Activated CD4-positive, alpha-beta T cell treated with anti-CD3 and anti-CD28 coated beads for 36 hours (primary cell): ENCODE measurements at regions of chrX and their contacts with region 1.

Region 1: GRCh38 chrX:108091266-108091877 is at the starts of genes ATG4A and PSMD10:
- DNase-seq: peak; percentile 94
- ATAC-seq: peak; percentile 96
- H3K4me3 Mint-ChIP-seq: no peak within 1 kb of the TSS
- H3K27ac Mint-ChIP-seq: no peak within 1 kb of the TSS
- H3K4me1 Mint-ChIP-seq: peaks cover 13% of the 10 kb centered on the region
- H3K27me3 Mint-ChIP-seq: no peaks in the 10 kb centered on the region
- total RNA-seq, gene ATG4A: 7.1 to 7.4 TPM
- total RNA-seq, gene PSMD10: 42.8 to 54.5 TPM

Region 2: DNA sequence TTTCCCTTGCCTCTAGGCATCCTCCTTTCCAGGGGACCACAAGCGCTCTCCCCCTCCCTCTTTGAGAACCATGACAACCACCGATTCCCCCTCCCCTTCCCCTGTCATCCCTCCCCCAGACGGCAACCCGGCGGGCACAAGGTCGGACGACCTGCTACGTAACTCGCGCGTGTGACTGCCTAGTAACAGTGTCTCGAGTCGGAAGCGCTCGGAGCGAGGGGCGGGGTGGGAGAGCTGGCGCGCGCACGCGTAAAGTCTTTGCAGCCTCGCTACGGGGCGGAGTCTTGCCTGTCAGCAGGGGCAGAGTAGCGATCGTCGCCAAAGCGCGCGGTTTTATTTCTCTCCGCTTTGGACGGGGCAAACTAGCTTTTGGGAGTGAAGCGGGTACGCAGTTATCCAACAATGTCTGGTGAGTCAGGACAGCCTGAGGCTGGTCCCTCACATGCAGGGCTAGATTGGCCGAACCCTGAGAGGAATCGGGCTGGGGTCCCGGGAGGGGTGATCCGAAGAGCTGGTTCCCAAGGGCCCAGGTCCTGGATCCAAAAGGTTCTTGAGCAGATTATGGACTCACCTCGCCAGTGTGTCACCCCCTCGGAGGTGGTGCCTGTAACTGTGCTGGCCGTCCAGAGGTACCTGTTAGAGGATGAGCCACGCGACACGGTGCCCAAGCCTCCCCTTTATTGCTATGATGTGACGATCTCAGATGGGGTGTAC is 1479.5 kb before region 1 on chrX and contains the start of gene RADX:
- CTCF ChIA-PET with region 1: no interaction called
- POLR2A ChIA-PET with region 1: no interaction called
- intact Hi-C with region 1: loop called in 1 of 2 experiments (anchors 10 kb)
- DNase-seq: peak; percentile 92
- ATAC-seq: peak; percentile 99
- H3K4me3 Mint-ChIP-seq: peak within 1 kb of the TSS; percentile 81
- H3K27ac Mint-ChIP-seq: peak within 1 kb of the TSS; percentile 86
- H3K4me1 Mint-ChIP-seq: peaks cover 14% of the 10 kb centered on the region
- H3K27me3 Mint-ChIP-seq: no peaks in the 10 kb centered on the region
- total RNA-seq, gene RADX: 9.3 to 14.7 TPM

Region 3: DNA sequence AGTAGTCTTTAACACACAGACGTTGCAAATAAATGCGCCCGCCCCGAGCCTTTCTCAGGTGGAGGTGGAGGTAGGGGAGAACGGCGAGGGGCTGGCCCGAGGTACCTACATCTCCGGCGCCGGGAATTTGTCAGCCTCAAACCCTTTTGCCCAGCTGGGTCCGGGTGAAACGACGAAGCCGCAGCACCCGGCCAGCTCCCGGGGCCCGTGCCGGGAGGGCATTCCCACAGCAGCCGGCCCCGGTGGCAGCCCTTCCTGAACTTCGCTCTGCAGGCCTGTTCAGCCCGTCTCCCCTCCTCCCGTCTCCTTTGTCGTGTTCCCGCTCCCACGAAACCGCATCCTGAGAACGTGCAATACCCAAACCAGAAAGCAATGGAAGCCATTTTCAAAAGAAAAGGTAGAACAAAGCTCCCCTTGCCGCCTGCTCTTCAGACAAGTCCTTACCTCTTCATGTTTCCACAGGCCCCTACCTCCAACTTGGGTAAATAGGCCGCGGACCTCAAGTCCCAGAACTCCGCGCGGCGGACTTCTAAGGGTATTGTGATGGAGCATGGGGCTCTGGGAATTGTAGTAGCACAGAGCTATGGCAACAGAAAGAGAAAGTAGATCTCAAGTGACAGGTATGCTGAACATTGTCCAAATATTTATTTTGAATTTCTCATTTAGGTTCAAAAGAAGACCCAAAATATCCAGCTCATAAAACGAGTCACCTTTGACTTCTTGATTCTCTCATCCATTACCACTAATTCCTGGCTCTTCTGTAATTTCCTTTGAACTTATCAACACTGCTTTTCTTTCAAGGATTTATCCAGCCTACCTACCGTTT is 972.8 kb before region 1 on chrX and contains the start of gene RBM41:
- CTCF ChIA-PET with region 1: no interaction called
- POLR2A ChIA-PET with region 1: no interaction called
- intact Hi-C with region 1: loop called in 1 of 2 experiments (anchors 2 kb)
- DNase-seq: peak; percentile 81
- ATAC-seq: peak; percentile 99
- H3K4me3 Mint-ChIP-seq: peak within 1 kb of the TSS; percentile 99
- H3K27ac Mint-ChIP-seq: peak within 1 kb of the TSS; percentile 98
- H3K4me1 Mint-ChIP-seq: peaks cover 27% of the 10 kb centered on the region
- H3K27me3 Mint-ChIP-seq: no peaks in the 10 kb centered on the region
- total RNA-seq, gene RBM41: 12.0 to 12.2 TPM

Region 4: DNA sequence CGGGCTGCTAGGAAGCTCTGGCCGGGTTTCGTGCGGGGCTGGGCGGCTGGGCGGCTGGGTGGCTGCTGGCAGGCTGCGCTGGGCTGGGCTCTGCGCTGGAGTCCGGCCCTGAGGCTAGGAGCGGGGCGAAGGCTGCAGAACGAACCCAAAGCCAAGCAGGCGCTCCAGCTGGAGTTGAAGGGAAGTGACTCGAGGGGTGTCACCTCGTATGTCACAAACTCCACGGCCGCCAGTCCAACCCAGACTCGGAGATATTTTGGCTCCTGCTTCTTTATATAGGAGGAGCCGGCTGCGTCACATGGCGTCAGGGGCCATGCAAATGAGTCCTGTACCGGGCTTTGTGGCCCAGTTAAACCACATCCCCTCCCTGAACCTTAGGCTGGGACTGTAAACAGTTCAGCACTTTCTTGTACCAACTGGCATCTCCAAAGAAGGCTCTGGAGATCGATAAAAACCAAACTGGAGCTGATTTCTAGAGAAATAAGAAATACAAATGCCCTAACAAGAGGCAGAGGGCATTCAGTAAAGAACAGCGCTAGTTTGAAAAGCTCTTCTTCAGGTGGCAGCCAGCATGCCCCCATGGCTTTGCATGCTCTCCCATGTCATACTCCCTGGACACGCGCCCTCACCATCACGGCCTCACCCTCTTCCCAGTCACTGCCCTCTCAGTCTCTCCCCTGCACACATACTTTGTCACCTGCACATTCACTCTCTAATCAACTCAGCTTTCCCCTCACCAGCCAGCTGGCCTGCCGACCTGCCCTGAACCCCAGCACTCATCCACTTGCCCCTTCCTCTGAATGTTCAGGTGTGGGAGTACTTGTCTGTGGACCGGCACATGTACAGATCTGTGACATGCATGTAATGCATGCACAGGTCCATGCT is 374.3 kb before region 1 on chrX:
- CTCF ChIA-PET with region 1: no interaction called
- POLR2A ChIA-PET with region 1: no interaction called
- intact Hi-C with region 1: loop called in 1 of 2 experiments (anchors 2 kb)
- DNase-seq: peak; percentile 88
- ATAC-seq: peak; percentile 88
- H3K4me3 Mint-ChIP-seq: peak overlapping the region; percentile 90
- H3K27ac Mint-ChIP-seq: peak overlapping the region; percentile 92
- H3K4me1 Mint-ChIP-seq: peaks cover 43% of the 10 kb centered on the region
- H3K27me3 Mint-ChIP-seq: no peaks in the 10 kb centered on the region

Region 5: GRCh38 chrX:108020631-108021030 is 70.7 kb before region 1 on chrX:
- CTCF ChIA-PET with region 1: interaction called, 7 read pairs
- POLR2A ChIA-PET with region 1: interaction called, 3 read pairs
- intact Hi-C with region 1: loop called in 1 of 2 experiments (anchors 1 kb)
- DNase-seq: peak; percentile 21
- ATAC-seq: peak; percentile 30
- H3K4me3 Mint-ChIP-seq: peak overlapping the region; percentile 23
- H3K27ac Mint-ChIP-seq: peak overlapping the region; percentile 73
- H3K4me1 Mint-ChIP-seq: peaks cover 77% of the 10 kb centered on the region
- H3K27me3 Mint-ChIP-seq: no peaks in the 10 kb centered on the region

Region 6: DNA sequence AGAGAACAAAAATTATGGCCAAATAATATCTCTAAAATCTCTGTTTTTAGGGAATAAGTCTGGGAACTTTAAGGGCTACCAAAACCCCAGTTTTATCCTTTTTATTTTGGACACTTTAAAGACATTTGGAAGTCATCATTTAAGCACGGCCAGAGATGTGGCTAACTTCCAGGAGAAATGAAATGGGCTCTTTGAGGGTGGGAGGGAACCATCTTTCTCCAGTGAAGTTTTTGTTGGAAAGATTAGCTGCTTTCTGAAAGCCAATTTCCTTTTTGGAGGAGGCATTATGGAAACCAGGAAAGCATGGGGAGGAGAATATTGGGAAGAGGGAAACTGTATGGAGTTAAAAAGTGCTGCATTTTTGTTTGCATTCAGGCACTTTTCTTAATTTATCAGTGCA is 41.7 kb before region 1 on chrX:
- CTCF ChIA-PET with region 1: no interaction called
- POLR2A ChIA-PET with region 1: no interaction called
- intact Hi-C with region 1: no loop called
- DNase-seq: no peak
- ATAC-seq: no peak
- H3K4me3 Mint-ChIP-seq: no peak overlapping the region
- H3K27ac Mint-ChIP-seq: no peak overlapping the region
- H3K4me1 Mint-ChIP-seq: peaks cover 8% of the 10 kb centered on the region
- H3K27me3 Mint-ChIP-seq: peaks cover 2% of the 10 kb centered on the region